GM12878 (cell line): ENCODE measurements at regions of chr1 and their contacts with region 1.

Region 1: DNA sequence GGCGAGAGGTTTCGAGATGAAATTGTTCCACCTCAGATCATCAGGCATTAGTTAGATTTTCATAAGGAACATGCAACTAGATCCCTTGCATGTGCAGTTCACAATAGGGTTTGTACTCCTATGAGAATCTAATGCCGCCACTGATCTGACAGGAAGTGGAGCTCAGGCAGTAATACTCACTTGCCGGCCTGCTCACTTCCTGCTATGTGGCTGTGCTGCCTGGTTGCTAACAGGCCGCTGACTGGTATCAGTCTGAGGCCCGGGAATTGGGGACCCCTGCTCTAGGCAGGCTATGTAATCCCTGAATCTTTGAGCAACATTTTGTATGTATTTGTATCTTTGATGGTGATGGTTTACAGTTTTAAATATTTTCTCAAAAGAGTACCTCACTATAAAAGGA is 32.5 kb downstream of the XKR8 start:
- DNase-seq: no peak
- ATAC-seq: no peak
- H3K4me3 ChIP-seq: no peak overlapping the region
- H3K27ac ChIP-seq: no peak overlapping the region
- H3K4me1 ChIP-seq: no peaks in the 10 kb centered on the region
- H3K27me3 ChIP-seq: no peaks in the 10 kb centered on the region
- CTCF ChIP-seq: no peak
- EP300 ChIP-seq: no peak
- POLR2A ChIP-seq: no peak
- RAD21 ChIP-seq: no peak

Region 2: GRCh38 chr1:27934818-27935549 is 57.3 kb before region 1 on chr1 and contains the start of gene SMPDL3B:
- CTCF ChIA-PET with region 1: interaction called, 5 read pairs
- POLR2A ChIA-PET with region 1: no interaction called
- RAD21 ChIA-PET with region 1: no interaction called
- SMC1A ChIA-PET with region 1: no interaction called
- in situ Hi-C with region 1: loop called (anchors 5 kb)
- intact Hi-C with region 1: no loop called
- DNase-seq: no peak
- ATAC-seq: peak; percentile 83
- H3K4me3 ChIP-seq: peak within 1 kb of the TSS; percentile 44
- H3K27ac ChIP-seq: no peak within 1 kb of the TSS
- H3K4me1 ChIP-seq: peaks cover 7% of the 10 kb centered on the region
- H3K27me3 ChIP-seq: peaks cover 0 to 2% of the 10 kb centered on the region in 2 experiments; a peak in 2 of 4 replicates
- CTCF ChIP-seq: no peak
- EP300 ChIP-seq: no peak
- POLR2A ChIP-seq: no peak
- RAD21 ChIP-seq: no peak
- polyA plus RNA-seq, gene SMPDL3B: 0.60 to 0.69 TPM